PC-3 (cell line): ENCODE measurements at regions of chr4 and their contacts with region 1.

Region 1: DNA sequence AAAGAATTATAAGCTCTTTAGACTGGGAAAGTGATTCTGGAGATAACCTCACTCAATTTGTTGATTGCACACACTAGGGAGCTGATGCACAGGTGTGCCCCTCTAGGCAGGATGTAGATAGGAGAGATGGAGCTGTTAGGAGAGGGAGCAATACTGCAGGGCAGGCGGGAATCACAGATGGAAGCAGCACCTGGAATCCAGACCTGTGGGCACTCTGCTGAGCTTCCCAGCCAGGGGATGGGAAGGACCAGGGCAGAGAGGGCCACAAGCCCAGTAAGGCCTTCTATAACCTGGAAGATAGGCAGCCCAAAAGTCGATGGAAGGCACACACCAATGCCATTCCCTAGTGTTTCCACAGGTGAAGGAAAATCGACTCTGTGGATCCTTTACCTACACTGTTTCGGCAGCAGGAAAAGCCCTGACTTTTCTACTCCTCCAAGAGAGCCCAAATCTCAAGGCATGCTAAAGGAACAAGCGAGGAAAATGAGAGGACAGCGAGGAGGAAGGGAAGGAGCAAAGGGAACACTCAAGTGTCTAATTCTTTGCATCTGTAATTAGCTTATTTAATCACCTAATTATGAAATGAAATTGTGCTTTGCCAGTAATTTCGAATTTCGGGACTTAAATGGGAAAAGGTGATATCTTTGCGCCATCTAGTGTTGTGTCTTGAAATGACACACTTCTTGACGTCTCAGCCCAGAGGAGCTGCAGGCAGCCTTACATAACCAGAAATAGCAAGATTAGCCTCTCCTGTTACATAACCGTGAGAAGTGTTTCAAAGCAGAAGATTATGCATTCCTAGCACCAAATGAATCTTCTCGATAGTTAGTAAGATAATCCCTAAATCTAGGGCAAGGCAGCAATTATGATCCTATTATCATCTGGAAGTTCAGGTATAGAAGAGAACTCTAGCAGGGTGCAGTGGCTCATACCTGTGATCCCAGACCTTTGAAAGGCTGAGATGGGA is 31.0 kb upstream of the TLR3 start:
- DNase-seq: peak; percentile 80
- ATAC-seq: peak; percentile 66
- H3K4me3 ChIP-seq: no peak overlapping the region
- H3K27ac ChIP-seq: no peak overlapping the region
- H3K4me1 ChIP-seq: no peaks in the 10 kb centered on the region
- H3K27me3 ChIP-seq: peaks cover 2% of the 10 kb centered on the region
- CTCF ChIP-seq: peak; percentile 78

Region 2: DNA sequence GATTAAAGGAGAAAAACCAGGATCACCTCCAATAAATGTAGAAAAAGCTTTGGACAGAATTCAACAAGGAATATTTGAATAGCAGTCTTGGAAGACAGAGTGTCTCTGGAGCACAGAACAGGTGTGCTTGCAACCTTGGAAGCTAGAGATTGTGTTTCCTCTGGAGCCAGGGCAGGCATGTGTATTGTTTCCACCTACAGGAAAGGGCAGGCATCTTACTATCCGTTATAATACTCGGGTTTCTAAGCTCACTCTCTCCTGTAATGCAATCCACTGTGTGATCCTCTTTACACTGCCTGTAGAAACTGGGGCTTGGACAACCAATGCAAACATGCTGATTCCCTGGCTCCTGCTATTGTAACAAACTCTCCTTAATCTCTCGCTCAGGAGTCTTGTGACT is 580.8 kb before region 1 on chr4:
- CTCF ChIA-PET with region 1: interaction called, 10 read pairs
- POLR2A ChIA-PET with region 1: no interaction called
- intact Hi-C with region 1: no loop called
- DNase-seq: no peak
- ATAC-seq: peak; percentile 35; the same call in 1 of the 2 replicates
- H3K4me3 ChIP-seq: no peak overlapping the region
- H3K27ac ChIP-seq: no peak overlapping the region
- H3K4me1 ChIP-seq: no peaks in the 10 kb centered on the region
- H3K27me3 ChIP-seq: no peaks in the 10 kb centered on the region
- CTCF ChIP-seq: no peak

Region 3: DNA sequence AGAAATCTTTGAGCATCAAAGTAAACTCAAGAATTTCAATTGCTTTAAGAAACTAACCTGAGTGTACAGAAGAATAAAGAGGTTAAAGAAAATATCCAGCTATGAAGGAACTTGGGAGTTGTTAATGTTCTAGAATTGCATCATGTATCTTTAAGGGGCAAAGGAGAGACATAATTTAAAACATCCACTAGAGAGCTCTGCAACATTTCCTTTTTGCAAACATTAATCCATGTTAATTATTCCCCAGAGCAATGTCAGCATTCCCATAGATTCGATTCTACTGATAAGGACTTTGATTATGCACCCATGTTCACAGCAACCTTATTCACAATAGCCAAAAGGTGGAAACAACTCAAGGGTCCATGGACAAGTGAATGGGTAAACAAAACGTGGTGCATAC is 145.8 kb before region 1 on chr4:
- CTCF ChIA-PET with region 1: no interaction called
- POLR2A ChIA-PET with region 1: no interaction called
- intact Hi-C with region 1: loop called (anchors 1 kb)
- DNase-seq: no peak
- ATAC-seq: no peak; the same call in 1 of the 2 replicates
- H3K4me3 ChIP-seq: no peak overlapping the region
- H3K27ac ChIP-seq: no peak overlapping the region
- H3K4me1 ChIP-seq: peaks cover 11% of the 10 kb centered on the region
- H3K27me3 ChIP-seq: no peaks in the 10 kb centered on the region
- CTCF ChIP-seq: no peak

Region 4: DNA sequence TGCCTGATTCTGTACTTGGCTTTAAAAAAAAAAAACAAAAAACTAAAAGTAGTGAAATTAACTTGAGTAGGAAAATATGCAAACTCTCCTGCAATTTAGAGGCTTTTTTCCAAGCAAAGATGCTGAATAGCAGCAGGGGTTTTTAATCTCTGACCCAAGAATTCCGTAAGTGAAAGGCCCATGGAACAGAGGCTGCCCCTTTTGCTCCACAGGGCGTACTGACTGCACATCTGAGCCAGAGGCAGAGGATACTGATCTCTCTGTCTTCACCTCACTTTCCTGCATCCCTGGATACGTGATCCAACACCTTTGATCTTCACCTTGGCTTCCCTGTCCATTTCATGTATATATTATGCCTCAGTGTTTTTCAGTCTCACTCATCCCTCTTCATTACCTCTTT is 70.4 kb after region 1 on chr4:
- CTCF ChIA-PET with region 1: no interaction called
- POLR2A ChIA-PET with region 1: no interaction called
- intact Hi-C with region 1: no loop called
- DNase-seq: no peak
- ATAC-seq: no peak
- H3K4me3 ChIP-seq: no peak overlapping the region
- H3K27ac ChIP-seq: no peak overlapping the region
- H3K4me1 ChIP-seq: no peaks in the 10 kb centered on the region
- H3K27me3 ChIP-seq: peaks cover 55% of the 10 kb centered on the region
- CTCF ChIP-seq: no peak

Region 5: DNA sequence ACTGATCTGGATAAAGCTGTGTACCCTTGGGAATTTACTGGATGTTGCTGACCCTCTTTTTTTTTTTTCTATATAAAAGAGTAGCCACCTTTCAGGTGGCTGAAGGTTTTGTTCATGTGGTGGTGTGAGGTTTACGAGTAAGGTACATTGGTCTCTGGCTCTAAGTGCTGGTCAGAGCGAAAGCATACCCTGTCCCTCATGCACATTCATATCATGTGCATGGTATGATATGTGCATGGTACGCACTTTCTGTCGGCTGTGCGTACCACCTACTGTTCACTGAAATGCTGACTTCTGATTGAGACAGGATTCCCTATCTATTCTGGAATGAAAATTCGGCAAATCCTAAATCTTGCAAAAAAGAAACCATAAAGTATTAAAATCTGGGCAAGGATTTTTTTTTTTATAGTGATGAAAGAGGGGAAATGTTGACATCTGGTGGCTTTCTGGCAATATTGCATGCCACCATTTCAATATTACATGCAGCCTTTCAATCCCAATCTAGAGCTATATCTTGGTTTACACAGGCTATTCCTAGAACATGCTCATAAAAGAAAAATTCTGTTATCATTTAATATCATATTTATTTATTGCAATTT is 99.3 kb after region 1 on chr4:
- CTCF ChIA-PET with region 1: interaction called, 5 read pairs
- POLR2A ChIA-PET with region 1: no interaction called
- intact Hi-C with region 1: loop called (anchors 5 kb)
- DNase-seq: peak; percentile 45
- ATAC-seq: peak; percentile 50; the same call in 1 of the 2 replicates
- H3K4me3 ChIP-seq: peak overlapping the region; percentile 41; the same call in 1 of the 2 replicates
- H3K27ac ChIP-seq: no peak overlapping the region
- H3K4me1 ChIP-seq: no peaks in the 10 kb centered on the region
- H3K27me3 ChIP-seq: no peaks in the 10 kb centered on the region
- CTCF ChIP-seq: peak; percentile 65

Region 6: DNA sequence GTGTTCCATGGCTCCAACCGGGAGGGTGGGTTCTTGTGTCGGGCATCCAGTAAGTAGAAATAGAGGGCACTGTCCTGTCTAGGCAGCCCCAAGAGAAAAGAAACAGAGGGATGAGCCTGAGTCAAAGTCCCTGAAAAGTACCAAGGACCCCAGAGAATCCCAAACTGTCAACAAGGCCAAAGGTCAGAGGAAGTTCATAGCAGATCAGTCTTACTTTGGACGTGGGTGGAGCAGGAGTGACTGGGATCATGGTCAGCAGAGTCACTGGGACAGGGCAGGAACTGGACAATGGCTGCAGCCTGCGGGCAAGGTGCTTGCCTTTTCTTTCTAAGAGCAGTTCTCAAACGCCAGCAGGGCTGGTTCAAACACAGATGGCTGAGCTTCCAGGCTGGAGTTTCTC is 245.3 kb after region 1 on chr4:
- CTCF ChIA-PET with region 1: no interaction called
- POLR2A ChIA-PET with region 1: no interaction called
- intact Hi-C with region 1: no loop called
- DNase-seq: no peak
- ATAC-seq: no peak
- H3K4me3 ChIP-seq: no peak overlapping the region
- H3K27ac ChIP-seq: no peak overlapping the region
- H3K4me1 ChIP-seq: no peaks in the 10 kb centered on the region
- H3K27me3 ChIP-seq: peaks cover 82% of the 10 kb centered on the region
- CTCF ChIP-seq: no peak